ENCODE measurements at regions of chr9 and their contacts with region 1.

Region 1: GRCh38 chr9:15104826-15105420 is 194.7 kb upstream of the FREM1 start:
- DNase-seq: peak in 12 of 14 experiments; percentile 3 to 67 (median 22)
- ATAC-seq: peak; percentile 93
- H3K4me3 ChIP-seq: no peak overlapping the region
- H3K4me3 Mint-ChIP-seq: no peak overlapping the region
- H3K27ac ChIP-seq: no peak overlapping the region
- H3K27ac Mint-ChIP-seq: no peak overlapping the region
- H3K4me1 ChIP-seq: no peaks in the 10 kb centered on the region
- H3K4me1 Mint-ChIP-seq: no peaks in the 10 kb centered on the region
- H3K27me3 ChIP-seq: no peaks in the 10 kb centered on the region
- H3K27me3 Mint-ChIP-seq: peaks cover 4% of the 10 kb centered on the region
- CTCF ChIP-seq: peak; percentile 89

Region 2: DNA sequence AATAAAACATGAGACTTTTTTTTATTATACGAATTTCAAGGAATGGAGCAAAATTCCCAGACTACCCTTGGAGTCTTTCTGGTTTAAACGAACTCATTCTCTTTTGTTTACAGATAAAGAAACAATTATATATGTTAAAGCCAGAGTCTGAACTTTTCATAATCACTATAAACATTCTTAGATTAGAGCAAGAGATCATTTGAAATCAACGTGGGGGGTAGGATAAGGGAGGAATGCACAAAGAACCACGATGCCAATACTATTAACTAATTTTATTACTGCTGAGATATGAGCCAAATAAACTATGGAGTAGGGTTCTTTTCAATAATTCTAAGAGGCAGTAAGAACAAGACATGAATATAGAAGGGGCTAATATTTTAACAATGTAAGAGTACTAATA is 46.7 kb before region 1 on chr9:
- CTCF ChIA-PET with region 1: no interaction called
- POLR2A ChIA-PET with region 1: no interaction called
- intact Hi-C with region 1: no loop called
- DNase-seq: no peak
- ATAC-seq: no peak
- H3K4me3 ChIP-seq: no peak overlapping the region
- H3K4me3 Mint-ChIP-seq: no peak overlapping the region
- H3K27ac ChIP-seq: no peak overlapping the region
- H3K27ac Mint-ChIP-seq: no peak overlapping the region
- H3K4me1 ChIP-seq: no peaks in the 10 kb centered on the region
- H3K4me1 Mint-ChIP-seq: no peaks in the 10 kb centered on the region
- H3K27me3 ChIP-seq: no peaks in the 10 kb centered on the region
- H3K27me3 Mint-ChIP-seq: peaks cover 14% of the 10 kb centered on the region
- CTCF ChIP-seq: no peak

Region 3: GRCh38 chr9:15142878-15143534 is 38.1 kb after region 1 on chr9:
- CTCF ChIA-PET with region 1: no interaction called
- POLR2A ChIA-PET with region 1: no interaction called
- intact Hi-C with region 1: loop called in 1 of 2 experiments (anchors 2 kb)
- DNase-seq: peak in 4 of 14 experiments; percentile 5 to 58 (median 44)
- ATAC-seq: peak; percentile 86
- H3K4me3 ChIP-seq: no peak overlapping the region
- H3K4me3 Mint-ChIP-seq: no peak overlapping the region
- H3K27ac ChIP-seq: no peak overlapping the region
- H3K27ac Mint-ChIP-seq: no peak overlapping the region
- H3K4me1 ChIP-seq: no peaks in the 10 kb centered on the region
- H3K4me1 Mint-ChIP-seq: peaks cover 7% of the 10 kb centered on the region
- H3K27me3 ChIP-seq: no peaks in the 10 kb centered on the region
- H3K27me3 Mint-ChIP-seq: no peaks in the 10 kb centered on the region
- CTCF ChIP-seq: peak; percentile 71

Measured in CD4-positive, alpha-beta T cell (primary cell).